Activated T-helper 1 cell treated with anti-CD3 and anti-CD28 coated beads, Interleukin-12 subunit alpha, Interleukin-12 subunit beta, Interleukin-2, Interleukin-4 antibody, amounts not matched to agents 30 ng/mL and 10 ng/mL and 1 ng/mL, durations not matched to agents 14 hours and 24 hours and 36 hours (primary cell): ENCODE measurements at regions of chr2 and their contacts with region 1.

Region 1: GRCh38 chr2:168136392-168136977 is 110.9 kb downstream of the STK39 start:
- DNase-seq: no peak
- H3K4me3 Mint-ChIP-seq: no peak overlapping the region
- H3K27ac Mint-ChIP-seq: no peak overlapping the region
- H3K4me1 Mint-ChIP-seq: peaks cover 20% of the 10 kb centered on the region
- H3K27me3 Mint-ChIP-seq: no peaks in the 10 kb centered on the region

Region 2: DNA sequence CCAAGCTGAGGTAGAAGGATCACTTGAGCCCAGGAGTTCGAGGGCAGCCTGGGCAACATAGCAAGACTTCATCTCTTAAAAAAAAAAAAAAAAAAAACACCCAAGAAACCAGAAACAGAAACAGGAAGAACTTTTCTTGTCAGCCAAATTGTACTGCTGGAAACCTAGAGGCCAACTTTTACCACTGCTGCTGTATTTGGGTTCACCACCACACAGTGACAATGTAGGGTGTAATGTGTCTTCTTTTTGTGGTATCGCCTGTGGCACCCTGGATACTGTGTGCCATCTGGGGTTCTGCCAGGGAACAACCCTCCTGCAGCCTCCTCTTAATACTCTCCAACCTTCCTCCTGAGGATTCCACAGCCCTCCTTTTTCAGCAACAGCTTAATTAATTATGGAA is 38.3 kb after region 1 on chr2:
- intact Hi-C with region 1: no loop called
- DNase-seq: no peak
- H3K4me3 Mint-ChIP-seq: peak overlapping the region; percentile 45
- H3K27ac Mint-ChIP-seq: peak overlapping the region; percentile 59
- H3K4me1 Mint-ChIP-seq: peaks cover 27% of the 10 kb centered on the region
- H3K27me3 Mint-ChIP-seq: no peaks in the 10 kb centered on the region

Region 3: DNA sequence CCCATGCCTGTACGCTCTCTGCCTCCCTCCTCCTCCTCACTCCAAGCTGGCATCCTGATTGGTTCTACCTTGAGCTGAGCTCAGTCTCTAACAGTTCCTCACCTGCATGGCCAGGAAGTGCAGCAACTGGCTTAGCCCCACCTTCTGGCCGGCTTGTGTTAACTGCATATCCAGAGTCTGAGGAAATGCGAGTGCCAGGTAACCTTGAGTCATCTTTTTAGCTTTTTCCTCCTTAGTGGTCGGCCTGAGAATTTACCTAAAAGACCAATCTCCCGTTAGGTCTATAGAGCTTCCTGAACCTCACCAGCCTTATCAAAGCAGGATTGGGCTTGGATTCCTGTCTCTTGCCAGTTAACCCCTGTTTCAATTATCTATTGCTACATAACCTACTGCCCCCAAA is 200.4 kb after region 1 on chr2:
- intact Hi-C with region 1: loop called (anchors 1 kb)
- DNase-seq: peak; percentile 25
- H3K4me3 Mint-ChIP-seq: no peak overlapping the region
- H3K27ac Mint-ChIP-seq: no peak overlapping the region
- H3K4me1 Mint-ChIP-seq: no peaks in the 10 kb centered on the region
- H3K27me3 Mint-ChIP-seq: peaks cover 8% of the 10 kb centered on the region